ENCODE measurements at regions of chr2 and their contacts with region 1.

Region 1: DNA sequence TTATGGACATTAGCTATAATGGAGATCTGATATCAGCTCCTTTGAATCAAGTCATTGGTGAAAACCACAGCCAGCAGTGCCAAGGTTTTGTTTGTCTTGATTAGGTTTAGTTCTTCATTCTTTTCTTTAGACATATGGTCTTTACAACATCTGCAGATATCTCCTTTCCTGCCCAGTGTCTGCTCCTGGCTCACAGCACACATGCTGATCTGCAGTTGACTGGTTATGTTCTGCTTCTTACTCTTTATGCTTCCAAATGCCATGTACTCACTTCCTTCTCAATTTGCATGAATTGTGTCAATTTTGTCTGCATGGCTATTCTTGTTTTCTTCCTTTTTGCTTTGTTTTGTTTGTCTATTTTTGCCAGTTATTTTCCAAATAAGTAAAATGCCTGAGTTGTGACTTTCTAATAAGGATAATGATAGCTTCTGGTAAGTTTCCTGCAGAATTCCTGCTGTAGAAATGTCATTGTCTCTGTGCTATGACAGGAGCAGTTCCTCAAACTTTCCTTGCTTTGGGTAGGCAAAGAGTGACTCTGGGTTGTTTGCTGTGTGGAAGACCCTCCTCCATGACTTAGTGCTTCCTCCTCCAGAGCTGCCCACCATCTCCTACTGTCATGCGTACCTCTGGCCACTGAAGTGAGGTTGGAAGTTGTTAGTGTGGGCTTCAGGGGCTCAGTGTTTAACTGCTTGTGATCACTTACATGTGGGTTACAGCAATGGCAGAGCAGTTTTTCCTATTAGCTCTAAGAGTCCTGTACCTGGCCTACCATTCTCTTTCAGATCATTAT is 8.2 kb downstream of the ARHGAP25 start:
- DNase-seq: no peak
- ATAC-seq: 0 out of 2 replicates have a peak, but pooled peaks have one; percentile 24
- H3K4me3 ChIP-seq: no peak overlapping the region
- H3K27ac ChIP-seq: no peak overlapping the region
- H3K4me1 ChIP-seq: peaks cover 9% of the 10 kb centered on the region
- H3K27me3 ChIP-seq: no peaks in the 10 kb centered on the region
- CTCF ChIP-seq: no peak
- POLR2A ChIP-seq: no peak
- RAD21 ChIP-seq: no peak

Region 2: DNA sequence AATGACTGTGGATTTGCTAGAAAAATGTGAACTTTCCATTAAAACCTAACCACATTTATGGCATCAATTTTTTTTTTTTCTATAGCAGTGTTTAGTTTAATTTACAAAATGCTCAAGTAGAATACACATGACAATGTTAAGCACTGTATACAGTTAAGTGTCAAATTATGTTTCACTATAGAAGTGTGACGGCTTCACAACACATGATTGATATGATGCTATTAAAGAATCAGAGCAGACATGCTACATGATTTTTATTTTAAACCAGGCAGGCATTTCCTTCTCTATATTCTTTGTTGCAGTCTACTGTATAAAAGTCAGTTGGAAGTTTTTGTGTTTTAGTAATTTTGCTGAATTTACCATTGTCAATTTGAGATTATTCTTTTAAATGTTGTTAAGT is 55.8 kb before region 1 on chr2:
- CTCF ChIA-PET with region 1: no interaction called
- POLR2A ChIA-PET with region 1: no interaction called
- dilution Hi-C with region 1: no loop called
- in situ Hi-C with region 1: no loop called
- intact Hi-C with region 1: no loop called
- DNase-seq: no peak
- ATAC-seq: no peak
- H3K4me3 ChIP-seq: no peak overlapping the region
- H3K27ac ChIP-seq: no peak overlapping the region
- H3K4me1 ChIP-seq: no peaks in the 10 kb centered on the region
- H3K27me3 ChIP-seq: peaks cover 20% of the 10 kb centered on the region
- CTCF ChIP-seq: no peak
- POLR2A ChIP-seq: no peak
- RAD21 ChIP-seq: no peak

Region 3: GRCh38 chr2:68698567-68699377 is 44.0 kb before region 1 on chr2:
- CTCF ChIA-PET with region 1: no interaction called
- POLR2A ChIA-PET with region 1: no interaction called
- dilution Hi-C with region 1: no loop called
- in situ Hi-C with region 1: no loop called
- intact Hi-C with region 1: no loop called
- DNase-seq: no peak
- ATAC-seq: no peak
- H3K4me3 ChIP-seq: no peak overlapping the region
- H3K27ac ChIP-seq: no peak overlapping the region
- H3K4me1 ChIP-seq: no peaks in the 10 kb centered on the region
- H3K27me3 ChIP-seq: peaks cover 30% of the 10 kb centered on the region
- CTCF ChIP-seq: no peak
- POLR2A ChIP-seq: no peak
- RAD21 ChIP-seq: no peak

Region 4: DNA sequence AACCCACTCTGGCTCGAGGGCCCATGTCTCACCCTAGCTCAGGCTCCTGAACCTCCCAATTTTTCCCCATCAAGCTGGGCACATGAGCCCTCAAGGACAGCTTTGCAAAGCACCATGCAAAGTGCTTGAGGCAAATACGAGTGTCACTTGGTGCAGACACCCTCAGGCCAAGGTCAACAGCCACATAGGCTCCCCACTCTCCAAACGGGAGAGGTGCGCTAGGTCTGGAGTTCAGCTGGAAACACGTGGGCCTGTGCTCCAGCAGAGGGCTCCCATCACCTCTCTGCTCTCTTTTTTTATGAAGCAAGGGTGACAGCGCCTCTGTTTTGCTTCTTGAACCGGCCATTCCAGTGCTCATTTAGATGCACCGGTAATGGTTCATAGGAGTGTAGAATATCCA is 20.1 kb before region 1 on chr2:
- CTCF ChIA-PET with region 1: no interaction called
- POLR2A ChIA-PET with region 1: interaction called, 10 read pairs
- dilution Hi-C with region 1: no loop called
- in situ Hi-C with region 1: no loop called
- intact Hi-C with region 1: no loop called
- DNase-seq: no peak
- ATAC-seq: no peak
- H3K4me3 ChIP-seq: no peak overlapping the region
- H3K27ac ChIP-seq: no peak overlapping the region
- H3K4me1 ChIP-seq: peaks cover 3% of the 10 kb centered on the region; the same call in 1 of the 2 replicates
- H3K27me3 ChIP-seq: no peaks in the 10 kb centered on the region; the same call in 1 of the 2 replicates
- CTCF ChIP-seq: no peak
- POLR2A ChIP-seq: no peak
- RAD21 ChIP-seq: no peak

Region 5: GRCh38 chr2:68909793-68910674 is 167.2 kb after region 1 on chr2:
- CTCF ChIA-PET with region 1: interaction called, 3 read pairs
- POLR2A ChIA-PET with region 1: no interaction called
- dilution Hi-C with region 1: no loop called
- in situ Hi-C with region 1: loop called (anchors 5 kb)
- intact Hi-C with region 1: no loop called
- DNase-seq: peak; percentile 82
- ATAC-seq: peak; percentile 83
- H3K4me3 ChIP-seq: no peak overlapping the region
- H3K27ac ChIP-seq: no peak overlapping the region
- H3K4me1 ChIP-seq: peaks cover 10% of the 10 kb centered on the region
- H3K27me3 ChIP-seq: no peaks in the 10 kb centered on the region
- CTCF ChIP-seq: peak; percentile 90
- POLR2A ChIP-seq: no peak
- RAD21 ChIP-seq: peak; percentile 95

Measured in IMR-90 (cell line).